ENCODE measurements at regions of chr2 and their contacts with region 1.

Region 1: DNA sequence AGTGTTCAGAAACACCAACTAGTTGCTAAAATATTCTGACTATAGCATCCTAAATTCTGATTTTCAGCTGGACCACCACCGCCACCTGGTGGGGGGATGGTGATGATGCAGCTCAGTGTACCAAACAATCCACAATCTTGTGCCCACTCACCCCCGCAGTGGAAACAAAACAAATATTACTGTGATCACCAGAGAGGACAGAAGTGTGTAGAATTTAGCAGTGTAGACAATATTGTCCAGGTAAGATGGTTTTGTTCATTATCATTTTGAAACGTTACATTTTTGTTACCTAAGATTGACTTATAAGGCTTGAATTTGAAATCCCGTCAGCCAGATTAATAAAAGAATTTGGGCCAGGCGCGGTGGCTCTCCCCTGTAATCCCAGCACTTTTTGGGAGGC is 31.7 kb upstream of the UBXN4 start:
- DNase-seq: peak; percentile 83
- ATAC-seq: peak; percentile 89
- H3K4me3 Mint-ChIP-seq: no peak overlapping the region
- H3K27ac Mint-ChIP-seq: no peak overlapping the region
- H3K4me1 Mint-ChIP-seq: peaks cover 2% of the 10 kb centered on the region
- H3K27me3 Mint-ChIP-seq: no peaks in the 10 kb centered on the region
- CTCF ChIP-seq: peak; percentile 97

Region 2: DNA sequence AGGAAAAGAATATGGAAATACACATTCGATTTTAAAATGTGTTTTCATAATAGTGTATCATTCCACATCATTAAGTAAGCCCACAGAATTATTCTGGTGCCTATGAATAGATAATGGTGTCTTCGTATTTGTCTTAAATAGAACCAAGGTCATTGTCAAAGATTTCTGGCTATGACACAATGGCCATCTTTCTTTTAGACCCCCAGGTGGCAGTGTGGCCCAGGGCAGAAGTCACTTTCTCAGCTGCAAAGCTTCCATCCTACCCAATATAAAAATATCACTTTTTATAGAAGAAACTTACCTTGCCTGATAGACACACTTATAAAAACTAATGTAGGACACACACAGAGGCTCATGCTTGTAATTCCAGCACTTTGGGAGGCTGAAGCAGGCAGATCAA is 236.4 kb before region 1 on chr2:
- CTCF ChIA-PET with region 1: interaction called, 32 read pairs
- POLR2A ChIA-PET with region 1: no interaction called
- intact Hi-C with region 1: loop called (anchors 5 kb)
- DNase-seq: peak; percentile 45
- ATAC-seq: peak; percentile 37
- H3K4me3 Mint-ChIP-seq: no peak overlapping the region
- H3K27ac Mint-ChIP-seq: no peak overlapping the region
- H3K4me1 Mint-ChIP-seq: peaks cover 8% of the 10 kb centered on the region
- H3K27me3 Mint-ChIP-seq: no peaks in the 10 kb centered on the region
- CTCF ChIP-seq: peak; percentile 35

Region 3: GRCh38 chr2:135504811-135505210 is 205.2 kb before region 1 on chr2:
- CTCF ChIA-PET with region 1: no interaction called
- POLR2A ChIA-PET with region 1: no interaction called
- intact Hi-C with region 1: no loop called
- DNase-seq: no peak
- ATAC-seq: no peak
- H3K4me3 Mint-ChIP-seq: no peak overlapping the region
- H3K27ac Mint-ChIP-seq: no peak overlapping the region
- H3K4me1 Mint-ChIP-seq: no peaks in the 10 kb centered on the region
- H3K27me3 Mint-ChIP-seq: no peaks in the 10 kb centered on the region
- CTCF ChIP-seq: no peak

Region 4: DNA sequence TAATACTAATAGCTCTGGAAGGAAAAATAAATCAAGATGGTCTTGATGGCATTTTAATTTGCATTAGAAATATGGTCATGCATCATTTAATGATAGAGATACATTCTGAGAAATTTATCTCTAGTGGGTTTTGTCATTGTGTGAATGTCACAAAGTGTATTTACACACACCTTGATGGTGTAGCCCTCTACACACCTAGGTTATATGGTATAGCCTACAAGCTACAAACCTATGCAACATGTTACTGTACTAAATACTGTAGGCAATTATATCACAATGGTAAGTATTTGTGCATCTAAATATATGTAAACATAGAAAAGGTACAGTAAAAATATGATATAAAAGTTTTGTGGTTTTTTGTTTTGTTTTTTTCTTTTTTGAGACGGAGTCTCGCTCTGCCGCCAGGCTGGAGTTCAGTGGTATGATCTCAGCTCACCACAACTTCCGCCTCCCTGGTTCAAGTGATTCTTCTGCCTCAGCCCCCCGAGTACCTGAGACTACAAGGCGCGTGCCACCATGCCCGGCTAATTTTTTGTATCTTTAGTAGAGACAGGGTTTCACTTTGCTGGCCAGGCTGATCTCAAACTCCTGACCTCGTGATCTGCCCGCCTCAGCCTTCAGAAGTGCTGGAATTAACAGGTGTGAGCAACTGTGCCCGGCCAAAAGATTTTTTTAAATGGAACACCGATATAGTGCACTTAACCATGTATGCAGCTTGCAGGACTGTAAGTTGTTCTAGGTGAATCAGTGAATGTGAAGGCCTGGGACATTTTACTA is 52.0 kb before region 1 on chr2:
- CTCF ChIA-PET with region 1: interaction called, 9 read pairs
- POLR2A ChIA-PET with region 1: no interaction called
- intact Hi-C with region 1: loop called (anchors 2 kb)
- DNase-seq: peak; percentile 84
- ATAC-seq: peak; percentile 80
- H3K4me3 Mint-ChIP-seq: peak overlapping the region; percentile 73
- H3K27ac Mint-ChIP-seq: peak overlapping the region; percentile 92
- H3K4me1 Mint-ChIP-seq: peaks cover 33% of the 10 kb centered on the region
- H3K27me3 Mint-ChIP-seq: no peaks in the 10 kb centered on the region
- CTCF ChIP-seq: no peak

Region 5: GRCh38 chr2:135689679-135690078 is 20.3 kb before region 1 on chr2:
- CTCF ChIA-PET with region 1: interaction called, 20 read pairs
- POLR2A ChIA-PET with region 1: no interaction called
- intact Hi-C with region 1: no loop called
- DNase-seq: no peak
- ATAC-seq: peak; percentile 64
- H3K4me3 Mint-ChIP-seq: peak overlapping the region; percentile 58
- H3K27ac Mint-ChIP-seq: peak overlapping the region; percentile 87
- H3K4me1 Mint-ChIP-seq: peaks cover 38% of the 10 kb centered on the region
- H3K27me3 Mint-ChIP-seq: no peaks in the 10 kb centered on the region
- CTCF ChIP-seq: no peak

Region 6: GRCh38 chr2:135728064-135728743 is 18.2 kb after region 1 on chr2:
- CTCF ChIA-PET with region 1: interaction called, 13 read pairs
- POLR2A ChIA-PET with region 1: no interaction called
- intact Hi-C with region 1: no loop called
- DNase-seq: no peak
- ATAC-seq: no peak
- H3K4me3 Mint-ChIP-seq: no peak overlapping the region
- H3K27ac Mint-ChIP-seq: no peak overlapping the region
- H3K4me1 Mint-ChIP-seq: peaks cover 13% of the 10 kb centered on the region
- H3K27me3 Mint-ChIP-seq: no peaks in the 10 kb centered on the region
- CTCF ChIP-seq: no peak

Region 7: DNA sequence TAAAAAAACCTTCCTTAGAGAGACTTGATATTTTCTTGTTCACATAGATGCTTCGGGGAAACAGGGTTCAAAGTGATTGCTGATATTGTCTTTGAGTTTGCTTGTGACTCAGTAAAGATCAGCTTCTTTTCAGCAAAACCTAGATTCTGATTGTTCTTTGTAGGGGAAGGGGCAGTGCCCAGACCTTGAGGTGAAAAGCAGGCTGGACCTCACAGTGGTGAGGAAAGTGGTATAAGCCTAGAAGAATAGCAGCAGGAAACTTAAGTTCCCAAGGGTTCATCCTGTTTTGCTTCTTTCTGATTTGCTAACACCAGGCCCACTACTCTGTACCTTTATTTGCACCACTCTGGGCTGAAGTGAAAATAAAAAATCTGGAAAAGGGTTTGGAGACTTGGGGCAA is 52.5 kb after region 1 on chr2:
- CTCF ChIA-PET with region 1: no interaction called
- POLR2A ChIA-PET with region 1: no interaction called
- intact Hi-C with region 1: no loop called
- DNase-seq: no peak
- ATAC-seq: no peak
- H3K4me3 Mint-ChIP-seq: no peak overlapping the region
- H3K27ac Mint-ChIP-seq: no peak overlapping the region
- H3K4me1 Mint-ChIP-seq: peaks cover 20% of the 10 kb centered on the region
- H3K27me3 Mint-ChIP-seq: no peaks in the 10 kb centered on the region
- CTCF ChIP-seq: no peak

Measured in activated CD8-positive, alpha-beta T cell treated with anti-CD3 and anti-CD28 coated beads for 36 hours (primary cell).